Gastrocnemius medialis (tissue), 4 donors: ENCODE measurements at regions of chr1 and their contacts with region 1.

Region 1: DNA sequence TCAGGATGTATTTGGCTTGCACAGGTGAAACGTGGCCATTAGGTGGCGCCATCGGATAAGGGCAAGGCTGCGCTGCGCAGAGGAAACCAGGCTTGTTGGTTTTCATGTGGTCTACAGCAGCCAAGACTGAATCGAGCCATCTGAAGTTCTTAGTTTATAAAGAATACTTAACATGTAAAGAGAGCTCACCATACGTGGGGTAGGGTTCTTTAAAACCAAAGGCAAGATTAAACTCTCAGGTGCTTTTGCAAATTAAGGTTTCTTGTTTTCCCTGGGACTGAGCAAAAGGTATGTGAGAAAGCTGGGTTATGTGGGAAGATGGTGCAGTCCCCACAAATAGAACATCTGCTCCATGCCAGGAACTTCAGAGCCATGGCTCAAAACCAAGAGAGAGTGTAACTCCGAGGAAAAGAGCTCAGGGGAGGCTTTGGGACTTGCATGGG is 9.3 kb downstream of the MASP2 start:
- DNase-seq: peak; percentile 71 to 80
- ATAC-seq: peak; percentile 93
- H3K4me3 ChIP-seq: peak overlapping the region in 1 of 4 donors; percentile 31
- H3K27ac ChIP-seq: peak overlapping the region in 2 of 4 donors; percentile 30 to 56
- H3K4me1 ChIP-seq: peaks cover 8 to 10% of the 10 kb centered on the region in 2 donors
- H3K27me3 ChIP-seq: no peaks in the 10 kb centered on the region
- CTCF ChIP-seq: peak; percentile 86 to 98 (median 94)
- POLR2A ChIP-seq: no peak

Region 2: DNA sequence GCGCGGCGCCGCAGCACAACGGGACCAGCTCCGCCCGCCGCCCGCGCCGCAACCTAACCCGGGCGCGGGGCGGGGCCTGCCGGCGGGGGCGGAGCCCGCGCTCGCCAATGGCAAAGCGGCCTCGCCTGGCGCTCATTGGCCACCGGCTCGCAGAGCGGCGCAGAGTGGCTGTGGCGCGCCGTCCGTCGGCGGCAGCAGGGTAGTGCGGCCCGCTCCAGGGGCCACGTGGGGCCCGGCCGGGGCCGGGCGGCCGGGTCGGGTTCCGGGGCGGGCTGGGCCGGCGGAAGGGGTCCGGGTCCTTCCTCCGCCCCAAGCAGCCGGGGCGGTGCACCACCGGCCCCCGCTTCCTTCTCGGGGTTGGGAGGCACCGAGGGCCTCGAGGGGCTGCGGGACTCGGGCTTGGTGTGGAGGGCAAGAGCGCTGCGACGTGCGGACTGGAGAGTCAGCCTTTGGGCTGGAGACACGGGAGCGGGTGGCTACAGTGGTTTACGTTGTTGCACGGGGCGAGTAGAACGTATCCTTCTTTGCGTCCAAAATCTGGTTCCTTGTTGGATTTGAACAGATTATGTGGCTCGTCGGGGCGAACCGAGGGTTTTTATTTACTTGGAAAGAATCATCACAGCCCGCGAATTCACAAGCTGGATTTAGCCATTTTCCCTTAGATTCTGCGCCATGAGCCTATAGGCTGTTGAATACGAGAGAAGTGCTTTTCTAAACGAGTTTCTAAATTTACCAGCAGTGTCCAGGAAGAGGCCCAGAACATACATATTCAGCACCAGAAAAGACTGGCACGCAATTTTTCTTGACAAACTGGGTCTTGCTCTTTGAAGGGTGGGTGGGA is 22.4 kb after region 1 on chr1 and contains the start of gene SRM:
- in situ Hi-C with region 1: no loop called
- intact Hi-C with region 1: loop called (anchors 1 kb)
- DNase-seq: peak; percentile 76 to 87
- ATAC-seq: peak; percentile 93 to 95
- H3K4me3 ChIP-seq: peak within 1 kb of the TSS; percentile 73 to 100 (median 94)
- H3K27ac ChIP-seq: peak within 1 kb of the TSS; percentile 77 to 95 (median 92)
- H3K4me1 ChIP-seq: peaks cover 18 to 19% of the 10 kb centered on the region in 2 donors
- H3K27me3 ChIP-seq: no peaks in the 10 kb centered on the region
- CTCF ChIP-seq: peak in 4 of 5 experiments; percentile 78 to 84 (median 82)
- POLR2A ChIP-seq: peak; percentile 73 to 84
- total RNA-seq, gene SRM: 32.1 to 80.3 (median 48.3) TPM